PC-9 (cell line): ENCODE measurements at regions of chr15 and their contacts with region 1.

Region 1: DNA sequence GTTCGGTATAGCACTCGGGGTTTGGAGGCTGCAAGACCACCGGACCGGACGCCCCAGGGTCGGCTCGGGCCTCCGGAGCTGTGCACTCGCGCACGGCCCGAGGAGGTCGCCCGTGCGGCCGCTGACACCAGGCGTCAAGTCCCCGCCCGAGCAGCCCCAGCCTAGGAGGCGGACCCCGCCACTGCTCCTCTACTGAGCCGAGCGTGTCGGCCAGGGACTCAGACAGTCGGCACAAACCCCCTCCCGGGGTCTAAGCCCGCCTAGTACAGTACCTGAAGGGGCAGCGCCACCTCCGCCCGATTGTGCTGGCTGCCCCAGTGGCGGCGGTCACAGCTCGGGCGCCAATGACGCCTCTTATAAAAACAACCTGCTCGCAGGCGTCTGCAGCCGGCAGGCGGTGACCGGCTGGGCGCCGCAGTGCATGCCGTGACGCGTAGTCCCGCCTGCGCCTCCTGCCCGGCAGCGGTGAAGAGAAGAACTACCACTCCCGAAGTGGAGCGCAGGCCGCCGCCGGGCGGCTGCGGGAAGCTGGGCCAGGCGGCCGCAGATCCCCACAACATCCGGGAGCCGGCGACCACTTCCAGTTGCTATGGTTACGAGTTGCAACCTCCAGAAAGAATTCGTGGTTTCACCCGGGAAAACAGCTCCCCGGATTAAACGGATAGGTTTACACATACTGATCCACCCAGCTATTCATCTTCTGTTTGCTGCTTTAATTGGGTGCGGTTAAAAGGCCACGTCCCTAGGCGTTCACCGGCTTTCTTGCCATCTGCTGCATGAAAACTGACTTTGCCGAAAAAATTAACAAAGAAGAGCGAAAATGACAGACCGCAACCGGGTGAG is at the starts of genes CCPG1 and PIERCE2:
- DNase-seq: peak; percentile 79 to 94
- H3K4me3 ChIP-seq: peak within 1 kb of the TSS; percentile 75
- H3K27ac ChIP-seq: peak within 1 kb of the TSS; percentile 55
- H3K4me1 ChIP-seq: peaks cover 34% of the 10 kb centered on the region
- H3K27me3 ChIP-seq: no peaks in the 10 kb centered on the region
- CTCF ChIP-seq: peak; percentile 72
- total RNA-seq, gene CCPG1: 26.3 and 26.4 TPM in 2 replicates
- total RNA-seq, gene PIERCE2: 1.2 and 2.1 TPM in 2 replicates

Region 2: GRCh38 chr15:54017959-54018358 is 1390.2 kb before region 1 on chr15:
- CTCF ChIA-PET with region 1: no interaction called
- POLR2A ChIA-PET with region 1: no interaction called
- intact Hi-C with region 1: no loop called
- DNase-seq: no peak
- H3K4me3 ChIP-seq: no peak overlapping the region
- H3K27ac ChIP-seq: no peak overlapping the region
- H3K4me1 ChIP-seq: no peaks in the 10 kb centered on the region
- H3K27me3 ChIP-seq: no peaks in the 10 kb centered on the region
- CTCF ChIP-seq: no peak

Region 3: GRCh38 chr15:55151631-55152030 is 256.5 kb before region 1 on chr15:
- CTCF ChIA-PET with region 1: no interaction called
- POLR2A ChIA-PET with region 1: no interaction called
- intact Hi-C with region 1: no loop called
- DNase-seq: no peak
- H3K4me3 ChIP-seq: no peak overlapping the region
- H3K27ac ChIP-seq: no peak overlapping the region
- H3K4me1 ChIP-seq: no peaks in the 10 kb centered on the region
- H3K27me3 ChIP-seq: peaks cover 17% of the 10 kb centered on the region; the same call in 1 of the 2 replicates
- CTCF ChIP-seq: no peak

Region 4: GRCh38 chr15:55196458-55197361 is 211.5 kb before region 1 on chr15 and contains the start of gene RSL24D1:
- CTCF ChIA-PET with region 1: no interaction called
- POLR2A ChIA-PET with region 1: no interaction called
- intact Hi-C with region 1: loop called (anchors 10 kb)
- DNase-seq: peak; percentile 92 to 94
- H3K4me3 ChIP-seq: peak within 1 kb of the TSS; percentile 99
- H3K27ac ChIP-seq: peak within 1 kb of the TSS; percentile 95
- H3K4me1 ChIP-seq: peaks cover 29% of the 10 kb centered on the region
- H3K27me3 ChIP-seq: no peaks in the 10 kb centered on the region
- CTCF ChIP-seq: no peak; the same call in 1 of the 2 replicates
- total RNA-seq, gene RSL24D1: 87.0 and 91.7 TPM in 2 replicates

Region 5: DNA sequence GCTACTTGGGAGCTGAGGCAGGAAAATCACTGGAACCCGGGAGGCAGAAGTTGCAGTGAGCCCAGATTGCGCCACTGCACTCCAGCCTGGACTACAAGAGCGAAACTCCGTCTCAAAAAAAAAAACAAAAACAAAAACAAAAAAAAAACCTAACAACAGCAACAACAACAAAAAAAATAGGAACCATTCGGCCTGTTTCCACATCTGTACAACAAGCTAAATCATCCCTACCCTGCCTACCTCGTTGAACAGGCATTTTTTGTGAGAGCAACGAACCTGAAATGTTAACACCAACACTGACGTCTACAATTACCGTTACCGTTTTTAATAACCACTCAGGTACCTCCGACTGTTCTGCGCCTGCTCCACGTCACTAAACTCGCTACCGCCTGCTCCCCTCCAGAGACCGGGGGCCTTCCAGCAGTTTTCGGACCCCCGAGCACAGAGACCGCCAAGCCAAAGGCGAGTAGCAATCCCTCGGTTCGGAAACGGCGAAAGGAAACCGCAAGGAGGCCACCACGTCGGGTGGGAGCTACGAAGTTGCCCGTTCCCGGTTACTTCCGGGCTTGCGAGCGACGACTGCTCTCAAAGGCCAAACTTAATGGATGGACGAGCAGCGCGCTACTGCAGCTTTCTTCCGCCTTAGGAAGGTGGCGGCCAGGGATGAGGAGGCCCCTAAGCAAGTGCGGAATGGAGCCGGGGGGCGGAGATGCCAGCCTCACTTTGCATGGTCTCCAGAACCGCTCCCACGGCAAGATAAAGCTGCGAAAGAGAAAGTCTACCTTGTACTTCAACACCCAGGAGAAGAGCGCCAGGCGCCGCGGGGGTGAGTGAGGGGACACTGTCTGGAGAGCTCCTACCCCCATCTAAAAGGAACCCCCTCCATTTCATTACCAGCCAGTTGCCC is 89.3 kb before region 1 on chr15 and contains the starts of genes PIGB and PIGBOS1:
- CTCF ChIA-PET with region 1: interaction called, 3 read pairs
- POLR2A ChIA-PET with region 1: interaction called, 18 read pairs
- intact Hi-C with region 1: loop called (anchors 5 kb)
- DNase-seq: peak; percentile 64 to 80
- H3K4me3 ChIP-seq: peak within 1 kb of the TSS; percentile 76
- H3K27ac ChIP-seq: peak within 1 kb of the TSS; percentile 81
- H3K4me1 ChIP-seq: no peaks in the 10 kb centered on the region
- H3K27me3 ChIP-seq: no peaks in the 10 kb centered on the region
- CTCF ChIP-seq: no peak
- total RNA-seq, gene PIGB: 12.2 and 17.1 TPM in 2 replicates
- total RNA-seq, gene PIGBOS1: 9.9 and 10.8 TPM in 2 replicates

Region 6: GRCh38 chr15:55357774-55358173 is 50.4 kb before region 1 on chr15:
- CTCF ChIA-PET with region 1: no interaction called
- POLR2A ChIA-PET with region 1: no interaction called
- intact Hi-C with region 1: no loop called
- DNase-seq: peak in 1 of 2 experiments; percentile 39
- H3K4me3 ChIP-seq: no peak overlapping the region
- H3K27ac ChIP-seq: no peak overlapping the region; the same call in 1 of the 2 replicates
- H3K4me1 ChIP-seq: peaks cover 24% of the 10 kb centered on the region
- H3K27me3 ChIP-seq: no peaks in the 10 kb centered on the region
- CTCF ChIP-seq: no peak